Calu3 (cell line): ENCODE measurements at regions of chr17 and their contacts with region 1.

Region 1: GRCh38 chr17:43737722-43738121 is 20.9 kb downstream of the SOST start:
- DNase-seq: no peak
- H3K4me3 Mint-ChIP-seq: no peak overlapping the region
- H3K27ac Mint-ChIP-seq: no peak overlapping the region
- H3K4me1 Mint-ChIP-seq: no peaks in the 10 kb centered on the region
- H3K27me3 Mint-ChIP-seq: peaks cover 54% of the 10 kb centered on the region
- CTCF ChIP-seq: no peak

Region 2: DNA sequence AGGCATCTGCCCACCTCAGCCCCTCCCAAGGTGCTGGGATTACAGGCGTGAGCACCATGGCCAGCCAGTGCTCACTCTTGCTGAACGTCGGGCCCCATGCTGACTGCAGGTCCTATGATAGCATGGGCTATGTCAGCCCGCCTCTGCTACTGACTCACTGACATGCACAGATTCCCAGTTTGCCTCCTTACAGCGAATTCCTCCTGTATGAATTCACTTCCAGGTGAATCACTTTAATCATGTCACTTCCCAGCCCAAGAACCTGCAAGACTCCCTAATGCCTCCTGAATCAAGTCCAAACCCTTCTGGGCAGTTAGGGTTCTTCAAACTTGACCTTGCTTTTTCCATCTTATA is 497.8 kb after region 1 on chr17:
- CTCF ChIA-PET with region 1: interaction called, 11 read pairs
- intact Hi-C with region 1: no loop called
- DNase-seq: no peak
- H3K4me3 Mint-ChIP-seq: peak overlapping the region; percentile 7
- H3K27ac Mint-ChIP-seq: peak overlapping the region; percentile 78
- H3K4me1 Mint-ChIP-seq: peaks cover 38% of the 10 kb centered on the region
- H3K27me3 Mint-ChIP-seq: peaks cover 13% of the 10 kb centered on the region
- CTCF ChIP-seq: no peak